ENCODE measurements at regions of chr3 and their contacts with region 1.

Region 1: DNA sequence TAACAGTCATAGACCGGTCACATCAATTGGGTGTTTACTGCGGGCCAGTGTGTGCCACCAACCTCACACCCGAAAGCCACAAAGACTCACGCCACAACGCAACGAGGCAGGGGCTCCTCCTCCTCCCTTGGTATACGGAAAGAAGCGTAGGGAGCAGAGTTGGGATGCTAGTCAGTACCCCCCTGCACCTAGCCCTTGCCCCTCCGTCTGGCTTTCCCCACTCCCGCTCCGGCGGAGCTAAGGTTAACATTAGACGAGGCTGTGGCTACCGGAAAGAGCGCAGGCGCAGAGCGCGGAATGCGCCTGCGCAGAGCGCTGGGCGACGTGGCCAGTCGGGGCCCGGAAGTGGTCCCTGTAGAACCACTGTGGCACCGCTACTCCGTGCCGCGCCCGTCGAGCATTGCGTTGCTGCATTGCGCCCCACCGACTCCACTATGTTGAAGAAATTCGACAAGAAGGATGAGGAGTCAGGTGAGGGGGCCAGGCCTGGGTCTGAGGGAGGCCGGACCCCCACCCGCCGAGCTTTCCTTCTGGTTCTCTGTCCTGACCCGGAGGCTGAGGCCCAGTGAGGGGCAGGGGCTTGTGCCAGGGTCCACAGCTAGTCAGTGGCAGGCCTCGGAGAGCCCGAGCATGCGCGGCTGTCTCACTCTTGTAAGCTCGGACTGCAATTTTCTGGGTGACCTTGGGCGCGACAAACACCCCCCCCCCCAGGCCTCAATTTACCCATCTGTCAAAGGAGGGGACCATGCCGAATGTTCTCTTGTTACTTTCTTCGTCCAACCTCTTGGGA is at the start of gene COPG1:
- DNase-seq: peak; percentile 72 to 94 (median 86)
- ATAC-seq: peak; percentile 85
- H3K4me3 ChIP-seq: peak within 1 kb of the TSS; percentile 100
- H3K4me3 Mint-ChIP-seq: peak within 1 kb of the TSS; percentile 98
- H3K27ac ChIP-seq: peak within 1 kb of the TSS; percentile 79 to 88
- H3K27ac Mint-ChIP-seq: peak within 1 kb of the TSS; percentile 97
- H3K4me1 ChIP-seq: peaks cover 47% of the 10 kb centered on the region
- H3K4me1 Mint-ChIP-seq: peaks cover 55% of the 10 kb centered on the region
- H3K27me3 ChIP-seq: no peaks in the 10 kb centered on the region
- H3K27me3 Mint-ChIP-seq: no peaks in the 10 kb centered on the region
- CTCF ChIP-seq: no peak
- total RNA-seq, gene COPG1: 77.7 to 79.3 TPM

Region 2: DNA sequence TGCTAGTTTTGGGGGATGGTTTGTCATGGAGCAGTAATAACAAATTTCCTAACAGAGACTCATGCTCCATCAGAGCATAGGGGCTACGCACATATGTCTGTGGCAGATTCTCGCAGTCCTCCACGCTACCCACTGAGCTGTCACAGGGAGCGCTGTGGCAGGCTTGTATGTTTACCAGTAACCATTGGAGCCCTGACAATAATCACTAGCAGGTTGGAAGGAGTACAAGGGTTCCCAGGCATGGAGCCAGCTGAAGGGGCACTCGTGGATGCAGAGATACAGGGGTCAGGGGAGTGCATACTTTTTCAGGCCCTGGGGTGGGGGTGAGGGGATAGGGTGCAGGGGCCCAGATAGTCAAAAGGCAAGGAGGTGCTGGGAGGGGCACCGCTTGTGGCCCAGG is 196.8 kb before region 1 on chr3:
- CTCF ChIA-PET with region 1: interaction called, 43 read pairs
- POLR2A ChIA-PET with region 1: interaction called, 12 read pairs
- intact Hi-C with region 1: loop called (anchors 1 kb)
- DNase-seq: no peak
- ATAC-seq: no peak
- H3K4me3 ChIP-seq: no peak overlapping the region
- H3K4me3 Mint-ChIP-seq: no peak overlapping the region
- H3K27ac ChIP-seq: no peak overlapping the region
- H3K27ac Mint-ChIP-seq: no peak overlapping the region
- H3K4me1 ChIP-seq: peaks cover 5% of the 10 kb centered on the region
- H3K4me1 Mint-ChIP-seq: peaks cover 9% of the 10 kb centered on the region
- H3K27me3 ChIP-seq: no peaks in the 10 kb centered on the region
- H3K27me3 Mint-ChIP-seq: no peaks in the 10 kb centered on the region
- CTCF ChIP-seq: no peak

Region 3: GRCh38 chr3:129160891-129161859 is 88.3 kb before region 1 on chr3 and contains the start of gene ISY1:
- CTCF ChIA-PET with region 1: interaction called, 29 read pairs
- POLR2A ChIA-PET with region 1: interaction called, 4 read pairs
- intact Hi-C with region 1: no loop called
- DNase-seq: peak; percentile 70 to 97 (median 84)
- ATAC-seq: peak; percentile 74
- H3K4me3 ChIP-seq: peak within 1 kb of the TSS; percentile 82
- H3K4me3 Mint-ChIP-seq: peak within 1 kb of the TSS; percentile 96
- H3K27ac ChIP-seq: peak within 1 kb of the TSS; percentile 92 to 99
- H3K27ac Mint-ChIP-seq: peak within 1 kb of the TSS; percentile 95
- H3K4me1 ChIP-seq: peaks cover 24% of the 10 kb centered on the region
- H3K4me1 Mint-ChIP-seq: peaks cover 55% of the 10 kb centered on the region
- H3K27me3 ChIP-seq: no peaks in the 10 kb centered on the region
- H3K27me3 Mint-ChIP-seq: no peaks in the 10 kb centered on the region
- CTCF ChIP-seq: peak; percentile 76
- total RNA-seq, gene ISY1: 28.2 to 28.5 TPM

Region 4: DNA sequence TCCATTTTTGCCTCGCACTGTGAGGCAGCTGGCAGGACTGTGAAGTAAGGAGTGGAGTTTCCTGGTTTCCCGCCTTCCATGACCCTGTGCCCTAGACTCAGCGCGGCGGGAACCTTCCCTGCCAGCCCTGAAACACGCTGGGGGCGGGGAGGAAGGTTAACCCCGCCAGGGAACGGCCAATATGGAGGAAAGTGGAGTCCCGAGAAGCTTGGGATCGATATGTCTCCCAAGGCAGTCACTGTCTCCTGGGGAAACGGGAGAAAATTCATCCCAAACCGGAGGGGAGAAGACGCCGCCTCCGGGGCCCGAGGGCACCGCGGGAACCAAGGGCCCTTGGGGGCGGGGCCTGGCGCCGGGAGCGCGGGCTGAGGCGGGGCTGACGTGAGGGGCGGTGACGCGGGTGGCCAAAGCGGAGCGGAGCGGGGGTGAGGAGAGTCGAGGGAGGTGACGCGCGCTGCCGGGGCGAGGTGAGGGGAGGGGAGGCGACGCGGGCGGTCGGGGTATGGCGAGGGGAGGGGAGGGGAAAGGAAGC is 29.0 kb after region 1 on chr3 and contains the start of gene HMCES:
- CTCF ChIA-PET with region 1: interaction called, 4 read pairs
- POLR2A ChIA-PET with region 1: interaction called, 20 read pairs
- intact Hi-C with region 1: loop called in 1 of 2 experiments (anchors 2 kb)
- DNase-seq: peak; percentile 91 to 98 (median 95)
- ATAC-seq: peak; percentile 92
- H3K4me3 ChIP-seq: peak within 1 kb of the TSS; percentile 79
- H3K4me3 Mint-ChIP-seq: peak within 1 kb of the TSS; percentile 97
- H3K27ac ChIP-seq: peak within 1 kb of the TSS; percentile 90 to 93
- H3K27ac Mint-ChIP-seq: peak within 1 kb of the TSS; percentile 95
- H3K4me1 ChIP-seq: peaks cover 45% of the 10 kb centered on the region
- H3K4me1 Mint-ChIP-seq: peaks cover 43% of the 10 kb centered on the region
- H3K27me3 ChIP-seq: no peaks in the 10 kb centered on the region
- H3K27me3 Mint-ChIP-seq: no peaks in the 10 kb centered on the region
- CTCF ChIP-seq: no peak
- total RNA-seq, gene HMCES: 63.5 to 64.0 TPM

Region 5: GRCh38 chr3:129424185-129424841 is 174.8 kb after region 1 on chr3:
- CTCF ChIA-PET with region 1: no interaction called
- POLR2A ChIA-PET with region 1: no interaction called
- intact Hi-C with region 1: no loop called
- DNase-seq: peak in 2 of 14 experiments; percentile 28 to 37
- ATAC-seq: no peak
- H3K4me3 ChIP-seq: no peak overlapping the region
- H3K4me3 Mint-ChIP-seq: no peak overlapping the region
- H3K27ac ChIP-seq: no peak overlapping the region
- H3K27ac Mint-ChIP-seq: no peak overlapping the region
- H3K4me1 ChIP-seq: peaks cover 15% of the 10 kb centered on the region
- H3K4me1 Mint-ChIP-seq: peaks cover 22% of the 10 kb centered on the region
- H3K27me3 ChIP-seq: no peaks in the 10 kb centered on the region
- H3K27me3 Mint-ChIP-seq: no peaks in the 10 kb centered on the region
- CTCF ChIP-seq: no peak

Measured in CD4-positive, alpha-beta T cell (primary cell).